T-cell (primary cell): ENCODE measurements at regions of chr14 and their contacts with region 1.

Region 1: GRCh38 chr14:22002860-22003309 is 329.3 kb upstream of the OR4E1 start:
- DNase-seq: peak; percentile 25 to 83 (median 63)
- ATAC-seq: peak; percentile 73 to 81 (median 78)
- H3K4me3 ChIP-seq: peak overlapping the region; percentile 38 to 39
- H3K4me3 Mint-ChIP-seq: peak overlapping the region; percentile 75 to 81 (median 76)
- H3K27ac ChIP-seq: peak overlapping the region; percentile 77
- H3K27ac Mint-ChIP-seq: peak overlapping the region; percentile 93 to 95
- H3K4me1 ChIP-seq: peaks cover 10 to 14% of the 10 kb centered on the region in 2 experiments
- H3K4me1 Mint-ChIP-seq: peaks cover 27 to 38% (median 29%) of the 10 kb centered on the region in 3 donors
- H3K27me3 ChIP-seq: no peaks in the 10 kb centered on the region
- H3K27me3 Mint-ChIP-seq: peaks cover 0 to 1% of the 10 kb centered on the region in 2 donors

Region 2: DNA sequence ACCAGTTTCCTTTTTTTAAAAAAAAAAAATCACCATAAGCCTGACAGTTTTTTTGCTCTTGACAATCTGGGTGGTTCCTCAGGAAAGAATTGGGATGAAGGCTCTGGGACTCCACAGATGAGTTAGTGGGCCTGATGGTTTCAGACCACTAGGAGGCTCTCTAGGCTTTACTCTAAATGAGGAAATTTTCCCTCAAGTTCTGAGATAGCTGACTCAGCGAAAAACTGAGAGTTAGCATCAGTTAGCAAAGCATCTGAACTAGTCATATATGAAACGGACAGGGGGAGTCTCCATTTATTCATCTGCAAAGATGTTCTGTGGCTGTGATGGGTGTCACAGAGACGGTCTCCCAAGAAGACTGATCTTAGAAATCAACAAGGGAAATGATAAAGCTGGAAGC is 14.9 kb before region 1 on chr14:
- CTCF ChIA-PET with region 1: interaction called, 4 to 19 read pairs
- POLR2A ChIA-PET with region 1: no interaction called
- DNase-seq: peak in 1 of 35 experiments; percentile 54
- ATAC-seq: peak in 1 of 4 experiments; percentile 51
- H3K4me3 ChIP-seq: no peak overlapping the region
- H3K4me3 Mint-ChIP-seq: peak overlapping the region in 1 of 3 donors; percentile 13
- H3K27ac ChIP-seq: no peak overlapping the region
- H3K27ac Mint-ChIP-seq: peak overlapping the region in 1 of 2 donors; percentile 66
- H3K4me1 ChIP-seq: no peaks in the 10 kb centered on the region
- H3K4me1 Mint-ChIP-seq: peaks cover 5 to 21% (median 6%) of the 10 kb centered on the region in 3 donors
- H3K27me3 ChIP-seq: no peaks in the 10 kb centered on the region
- H3K27me3 Mint-ChIP-seq: peaks cover 0 to 3% of the 10 kb centered on the region in 2 donors